Gastrocnemius medialis (tissue), 4 donors: ENCODE measurements at regions of chr6 and their contacts with region 1.

Region 1: DNA sequence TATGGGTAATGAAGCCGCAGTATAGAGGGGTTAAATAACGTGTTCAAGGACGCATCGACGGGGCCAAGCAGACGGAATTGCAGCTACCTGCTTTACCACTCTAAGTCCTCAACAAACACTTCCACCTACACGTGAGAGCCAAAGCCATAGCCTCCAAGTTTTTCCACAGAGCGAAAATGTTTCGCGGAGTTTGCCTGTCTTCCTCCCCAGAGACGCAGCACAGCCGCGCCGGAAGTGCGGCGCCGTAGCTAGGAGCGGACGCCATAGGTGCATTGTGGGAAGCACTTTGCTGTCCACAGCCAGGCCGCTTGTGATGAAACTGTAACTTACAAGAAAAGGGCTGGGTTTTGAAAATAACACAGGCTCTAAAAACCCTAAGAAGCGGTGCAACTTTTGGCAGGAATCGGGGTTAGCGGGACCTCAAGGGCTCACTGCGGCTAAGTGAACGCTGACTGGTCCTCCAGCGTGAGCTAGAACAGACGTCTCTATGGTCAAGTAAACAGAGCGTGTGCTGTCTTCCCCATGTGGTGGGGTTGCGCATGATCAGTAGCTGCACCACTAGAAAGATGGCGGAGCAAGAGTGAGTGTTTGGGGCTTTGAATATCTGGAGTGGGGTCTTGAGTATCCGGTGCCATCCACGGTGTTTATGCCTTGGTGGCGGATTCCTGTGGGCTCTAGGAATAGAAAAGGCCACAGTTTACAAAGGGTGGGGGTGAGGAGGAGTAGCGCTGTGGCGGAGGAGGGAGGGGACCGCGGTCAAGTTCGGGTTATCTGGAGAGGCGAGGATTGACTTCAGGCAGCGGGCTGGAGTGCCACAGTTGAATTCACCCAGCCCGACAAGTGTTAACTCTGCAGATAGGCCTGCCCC is at the start of gene RPL7L1:
- DNase-seq: peak; percentile 80 to 86
- ATAC-seq: peak; percentile 96 to 99
- H3K4me3 ChIP-seq: peak within 1 kb of the TSS; percentile 75 to 92 (median 80)
- H3K27ac ChIP-seq: peak within 1 kb of the TSS; percentile 85 to 96 (median 94)
- H3K4me1 ChIP-seq: peaks cover 23 to 24% of the 10 kb centered on the region in 2 donors
- H3K27me3 ChIP-seq: no peaks in the 10 kb centered on the region
- CTCF ChIP-seq: peak in 2 of 5 experiments; percentile 20 to 41
- POLR2A ChIP-seq: peak; percentile 64 to 80
- total RNA-seq, gene RPL7L1: 59.6 to 87.1 (median 65.2) TPM

Region 2: DNA sequence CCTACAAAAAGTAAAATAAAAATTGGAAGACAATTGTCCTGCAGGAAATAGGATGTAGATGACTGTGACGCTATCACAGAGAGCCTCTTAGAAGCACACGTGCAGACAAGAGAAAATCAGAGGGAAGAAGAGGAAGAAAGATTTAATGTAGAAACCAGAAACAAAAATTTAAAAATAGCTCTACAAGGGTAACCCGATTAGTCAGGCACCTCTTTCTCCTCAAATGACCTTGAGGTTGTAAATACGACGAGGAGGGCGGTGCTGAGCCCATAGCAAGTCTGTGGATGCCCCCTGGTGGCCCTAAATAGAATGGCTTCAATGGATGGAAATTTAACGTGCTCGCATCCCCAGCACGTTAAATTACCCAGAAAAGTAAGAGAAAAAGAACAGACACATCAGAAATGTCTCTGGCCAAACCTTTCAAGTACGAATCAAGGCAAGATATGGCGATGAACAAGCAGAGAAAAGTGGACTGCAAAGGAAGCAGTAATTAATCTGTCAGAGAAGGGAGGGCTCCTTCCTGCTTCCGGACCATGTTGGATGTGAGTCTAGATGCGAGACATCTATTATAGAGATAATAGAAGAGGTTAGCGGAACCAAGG is 153.0 kb before region 1 on chr6:
- in situ Hi-C with region 1: loop called in 3 of 4 experiments (anchors 5 to 25 kb)
- intact Hi-C with region 1: loop called (anchors 2 kb)
- DNase-seq: peak; percentile 79 to 84
- ATAC-seq: peak; percentile 94 to 98
- H3K4me3 ChIP-seq: peak overlapping the region; percentile 55 to 74 (median 60)
- H3K27ac ChIP-seq: peak overlapping the region; percentile 72 to 86 (median 74)
- H3K4me1 ChIP-seq: peaks cover 13 to 27% of the 10 kb centered on the region in 2 donors
- H3K27me3 ChIP-seq: no peaks in the 10 kb centered on the region
- CTCF ChIP-seq: peak; percentile 90 to 98 (median 95)
- POLR2A ChIP-seq: no peak

Region 3: DNA sequence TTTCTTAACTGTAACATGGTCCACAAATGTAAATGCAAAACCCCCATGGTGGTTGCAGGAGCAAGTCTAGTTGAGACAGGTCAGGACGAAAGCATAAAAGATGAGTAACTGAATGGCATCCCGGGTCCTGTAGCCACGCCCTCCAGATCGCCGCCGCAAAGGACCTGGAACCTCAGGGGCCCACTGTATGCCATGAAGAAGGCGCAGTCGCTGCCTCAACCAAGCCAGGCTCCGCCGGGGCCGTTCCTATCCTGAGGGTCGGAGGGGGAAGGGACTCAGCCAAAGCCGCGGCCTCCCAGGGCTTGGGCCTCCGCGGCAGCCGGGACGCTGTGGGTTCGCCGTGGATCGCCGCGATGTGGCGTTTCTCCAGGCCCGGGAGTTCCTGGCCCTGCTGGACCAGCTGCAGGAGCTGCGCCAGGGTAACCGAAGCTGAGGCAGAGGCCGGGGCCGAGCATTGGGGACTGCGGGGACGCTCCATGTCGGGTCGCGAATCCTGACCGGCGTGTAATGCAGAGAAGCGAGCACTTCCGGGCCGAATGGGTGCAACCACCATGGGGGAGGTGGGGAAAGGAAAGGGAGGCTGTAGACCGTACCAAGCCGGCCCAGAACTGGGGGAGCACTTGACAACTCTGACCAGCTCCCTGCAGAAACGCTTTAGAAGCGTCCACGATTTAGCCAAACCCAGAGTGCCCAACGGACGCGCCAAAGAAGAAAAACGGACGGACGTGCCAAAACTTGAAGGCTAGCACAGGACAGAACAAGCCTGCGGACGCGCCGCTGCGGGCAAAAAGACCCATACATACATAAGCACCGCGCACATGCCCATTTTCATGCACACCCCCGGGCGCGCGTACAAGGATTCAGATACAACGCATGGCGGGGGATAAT is 10.9 kb after region 1 on chr6:
- in situ Hi-C with region 1: no loop called
- intact Hi-C with region 1: loop called (anchors 1 kb)
- DNase-seq: peak; percentile 90 to 94
- ATAC-seq: peak; percentile 98
- H3K4me3 ChIP-seq: peak overlapping the region; percentile 93 to 99 (median 96)
- H3K27ac ChIP-seq: peak overlapping the region; percentile 89 to 99 (median 98)
- H3K4me1 ChIP-seq: peaks cover 13% of the 10 kb centered on the region in 2 donors
- H3K27me3 ChIP-seq: no peaks in the 10 kb centered on the region
- CTCF ChIP-seq: no peak
- POLR2A ChIP-seq: peak; percentile 51 to 70

Region 4: GRCh38 chr6:42984001-42984923 is 104.7 kb after region 1 on chr6 and contains the start of gene PPP2R5D:
- in situ Hi-C with region 1: no loop called
- intact Hi-C with region 1: no loop called
- DNase-seq: peak; percentile 98 to 99
- ATAC-seq: peak; percentile 98 to 100
- H3K4me3 ChIP-seq: peak within 1 kb of the TSS; percentile 83 to 89 (median 86)
- H3K27ac ChIP-seq: peak within 1 kb of the TSS; percentile 85 to 95 (median 90)
- H3K4me1 ChIP-seq: peaks cover 39 to 49% of the 10 kb centered on the region in 2 donors
- H3K27me3 ChIP-seq: no peaks in the 10 kb centered on the region
- CTCF ChIP-seq: peak in 1 of 5 experiments; percentile 8
- POLR2A ChIP-seq: peak; percentile 72 to 80
- total RNA-seq, gene PPP2R5D: 44.3 to 68.2 (median 52.6) TPM

Region 5: GRCh38 chr6:43702534-43703440 is 823.2 kb after region 1 on chr6:
- in situ Hi-C with region 1: no loop called
- intact Hi-C with region 1: no loop called
- DNase-seq: peak; percentile 80 to 88
- ATAC-seq: peak; percentile 68 to 74
- H3K4me3 ChIP-seq: no peak overlapping the region
- H3K27ac ChIP-seq: peak overlapping the region; percentile 79 to 84 (median 82)
- H3K4me1 ChIP-seq: peaks cover 37 to 55% of the 10 kb centered on the region in 2 donors
- H3K27me3 ChIP-seq: no peaks in the 10 kb centered on the region
- CTCF ChIP-seq: no peak
- POLR2A ChIP-seq: peak; percentile 46 to 67